SK-N-SH (cell line): ENCODE measurements at regions of chr2 and their contacts with region 1.

Region 1: GRCh38 chr2:44479122-44479887 is 117.6 kb downstream of the CAMKMT start:
- DNase-seq: peak; percentile 81
- H3K4me3 ChIP-seq: peak overlapping the region in 1 of 2 experiments; percentile 23; a peak in 1 of 4 replicates
- H3K27ac ChIP-seq: peak overlapping the region in 1 of 2 experiments; percentile 65; a peak in 2 of 4 replicates
- H3K4me1 ChIP-seq: peaks cover 0 to 12% of the 10 kb centered on the region in 2 experiments; a peak in 2 of 4 replicates
- H3K27me3 ChIP-seq: no peaks in the 10 kb centered on the region
- CTCF ChIP-seq: peak; percentile 100
- EP300 ChIP-seq: peak; percentile 15 to 49; a peak in 1 of 4 replicates
- RAD21 ChIP-seq: peak; percentile 100

Region 2: GRCh38 chr2:43877782-43878464 is 601.4 kb before region 1 on chr2:
- CTCF ChIA-PET with region 1: interaction called, 10 read pairs
- POLR2A ChIA-PET with region 1: no interaction called
- DNase-seq: peak; percentile 87
- H3K4me3 ChIP-seq: peak overlapping the region in 1 of 2 experiments; percentile 38; a peak in 1 of 4 replicates
- H3K27ac ChIP-seq: no peak overlapping the region
- H3K4me1 ChIP-seq: peaks cover 0 to 7% of the 10 kb centered on the region in 2 experiments; a peak in 1 of 4 replicates
- H3K27me3 ChIP-seq: no peaks in the 10 kb centered on the region; the same call in 1 of the 2 replicates
- CTCF ChIP-seq: peak; percentile 98
- EP300 ChIP-seq: no peak
- RAD21 ChIP-seq: peak; percentile 96

Region 3: GRCh38 chr2:44430342-44430741 is 49.0 kb before region 1 on chr2:
- CTCF ChIA-PET with region 1: interaction called, 12 read pairs
- POLR2A ChIA-PET with region 1: no interaction called
- DNase-seq: no peak
- H3K4me3 ChIP-seq: no peak overlapping the region
- H3K27ac ChIP-seq: no peak overlapping the region
- H3K4me1 ChIP-seq: peaks cover 0 to 5% of the 10 kb centered on the region in 2 experiments; a peak in 1 of 4 replicates
- H3K27me3 ChIP-seq: no peaks in the 10 kb centered on the region
- CTCF ChIP-seq: no peak
- EP300 ChIP-seq: no peak
- RAD21 ChIP-seq: no peak

Region 4: GRCh38 chr2:44549095-44549463 is 69.8 kb after region 1 on chr2:
- CTCF ChIA-PET with region 1: interaction called, 133 read pairs
- POLR2A ChIA-PET with region 1: no interaction called
- DNase-seq: no peak
- H3K4me3 ChIP-seq: peak overlapping the region; percentile 5 to 18; a peak in 2 of 4 replicates
- H3K27ac ChIP-seq: peak overlapping the region; percentile 75 to 92; a peak in 3 of 4 replicates
- H3K4me1 ChIP-seq: peaks cover 46 to 47% of the 10 kb centered on the region in 2 experiments
- H3K27me3 ChIP-seq: no peaks in the 10 kb centered on the region
- CTCF ChIP-seq: no peak
- EP300 ChIP-seq: peak; percentile 30 to 85; a peak in 3 of 4 replicates
- RAD21 ChIP-seq: no peak

Region 5: DNA sequence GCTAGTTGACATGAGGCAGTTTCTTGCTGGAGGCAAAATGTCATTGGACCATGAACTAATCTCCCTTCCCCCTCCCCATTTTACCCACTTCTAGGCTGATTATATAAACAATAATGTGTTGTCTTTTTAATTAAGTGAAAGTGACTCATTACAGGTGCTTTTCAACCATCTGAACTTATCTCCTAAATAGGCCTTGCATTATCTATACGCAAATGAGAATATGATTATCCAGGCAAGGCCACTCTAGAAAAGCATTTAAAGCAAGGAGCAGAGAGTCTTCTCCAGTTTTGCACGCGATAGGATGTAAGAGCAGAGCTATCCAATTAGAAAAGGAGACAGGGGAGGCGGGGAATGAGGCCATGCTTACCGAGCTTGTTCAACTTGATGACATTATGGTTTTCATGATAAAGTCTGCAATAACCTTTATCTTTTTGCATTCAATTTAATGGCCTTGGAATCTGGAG is 176.1 kb after region 1 on chr2:
- CTCF ChIA-PET with region 1: interaction called, 17 read pairs
- POLR2A ChIA-PET with region 1: no interaction called
- DNase-seq: peak; percentile 32
- H3K4me3 ChIP-seq: no peak overlapping the region
- H3K27ac ChIP-seq: peak overlapping the region in 1 of 2 experiments; percentile 36; a peak in 1 of 4 replicates
- H3K4me1 ChIP-seq: peaks cover 0 to 21% of the 10 kb centered on the region in 2 experiments; a peak in 2 of 4 replicates
- H3K27me3 ChIP-seq: no peaks in the 10 kb centered on the region
- CTCF ChIP-seq: no peak
- EP300 ChIP-seq: peak in 1 of 2 experiments; percentile 26; a peak in 1 of 4 replicates
- RAD21 ChIP-seq: no peak

Region 6: GRCh38 chr2:44731505-44731904 is 252.2 kb after region 1 on chr2:
- CTCF ChIA-PET with region 1: interaction called, 12 read pairs
- POLR2A ChIA-PET with region 1: no interaction called
- DNase-seq: no peak
- H3K4me3 ChIP-seq: no peak overlapping the region
- H3K27ac ChIP-seq: no peak overlapping the region
- H3K4me1 ChIP-seq: no peaks in the 10 kb centered on the region
- H3K27me3 ChIP-seq: no peaks in the 10 kb centered on the region
- CTCF ChIP-seq: no peak
- EP300 ChIP-seq: no peak
- RAD21 ChIP-seq: no peak

Region 7: DNA sequence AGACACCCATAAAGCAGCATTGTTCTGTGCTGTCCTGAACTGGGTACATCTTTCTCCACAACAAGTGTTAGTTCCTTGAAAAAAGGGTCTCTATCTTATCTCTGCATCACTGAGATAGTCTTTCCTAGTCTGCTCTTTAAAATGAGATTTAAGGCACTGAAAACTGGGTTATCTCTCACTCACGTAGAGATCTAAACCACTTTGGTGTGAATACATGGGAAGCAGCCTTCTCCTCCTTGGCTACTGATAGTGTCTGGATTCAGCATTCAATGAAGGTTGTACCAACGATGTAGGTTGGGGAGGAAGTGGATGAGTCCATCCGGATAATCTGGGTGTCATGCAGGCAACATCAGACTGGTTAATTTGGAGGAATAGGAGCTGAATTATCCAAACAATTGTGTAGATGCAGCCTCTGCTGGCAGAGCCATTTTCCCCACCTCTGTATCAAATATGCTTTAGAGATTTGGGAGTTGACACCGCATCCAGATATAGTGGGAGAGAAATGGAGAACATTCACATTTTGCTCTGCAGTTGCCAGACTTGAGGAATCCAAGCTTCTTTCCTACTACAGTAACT is 446.3 kb after region 1 on chr2:
- CTCF ChIA-PET with region 1: interaction called, 22 read pairs
- POLR2A ChIA-PET with region 1: no interaction called
- DNase-seq: no peak
- H3K4me3 ChIP-seq: no peak overlapping the region
- H3K27ac ChIP-seq: no peak overlapping the region; a peak in 1 of 4 replicates
- H3K4me1 ChIP-seq: peaks cover 0 to 2% of the 10 kb centered on the region in 2 experiments; a peak in 1 of 4 replicates
- H3K27me3 ChIP-seq: peaks cover 28% of the 10 kb centered on the region; the same call in 1 of the 2 replicates
- CTCF ChIP-seq: no peak
- EP300 ChIP-seq: no peak
- RAD21 ChIP-seq: no peak